Naive thymus-derived CD4-positive, alpha-beta T cell (primary cell): ENCODE measurements at regions of chr21 and their contacts with region 1.

Region 1: GRCh38 chr21:38244885-38245545 is 11.8 kb upstream of the KCNJ15 start:
- DNase-seq: peak; percentile 11 to 84 (median 70)
- ATAC-seq: peak; percentile 97
- H3K4me3 ChIP-seq: no peak overlapping the region
- H3K4me3 Mint-ChIP-seq: peak overlapping the region in 8 of 10 donors; percentile 42 to 74 (median 48)
- H3K27ac ChIP-seq: no peak overlapping the region
- H3K27ac Mint-ChIP-seq: peak overlapping the region; percentile 81 to 97 (median 89)
- H3K4me1 ChIP-seq: peaks cover 0 to 19% of the 10 kb centered on the region in 2 donors
- H3K4me1 Mint-ChIP-seq: peaks cover 17 to 43% (median 26%) of the 10 kb centered on the region in 7 donors
- H3K27me3 ChIP-seq: no peaks in the 10 kb centered on the region
- H3K27me3 Mint-ChIP-seq: peaks cover 0 to 17% (median 0%) of the 10 kb centered on the region in 5 donors

Region 2: GRCh38 chr21:38269576-38269936 is 24.5 kb after region 1 on chr21:
- CTCF ChIA-PET with region 1: interaction called, 3 read pairs
- POLR2A ChIA-PET with region 1: no interaction called
- intact Hi-C with region 1: loop called in 1 of 2 experiments (anchors 2 kb)
- DNase-seq: no peak
- ATAC-seq: no peak
- H3K4me3 ChIP-seq: no peak overlapping the region
- H3K4me3 Mint-ChIP-seq: no peak overlapping the region
- H3K27ac ChIP-seq: no peak overlapping the region
- H3K27ac Mint-ChIP-seq: no peak overlapping the region
- H3K4me1 ChIP-seq: no peaks in the 10 kb centered on the region
- H3K4me1 Mint-ChIP-seq: peaks cover 0 to 35% (median 6%) of the 10 kb centered on the region in 7 donors
- H3K27me3 ChIP-seq: no peaks in the 10 kb centered on the region
- H3K27me3 Mint-ChIP-seq: peaks cover 0 to 6% (median 3%) of the 10 kb centered on the region in 5 donors

Region 3: DNA sequence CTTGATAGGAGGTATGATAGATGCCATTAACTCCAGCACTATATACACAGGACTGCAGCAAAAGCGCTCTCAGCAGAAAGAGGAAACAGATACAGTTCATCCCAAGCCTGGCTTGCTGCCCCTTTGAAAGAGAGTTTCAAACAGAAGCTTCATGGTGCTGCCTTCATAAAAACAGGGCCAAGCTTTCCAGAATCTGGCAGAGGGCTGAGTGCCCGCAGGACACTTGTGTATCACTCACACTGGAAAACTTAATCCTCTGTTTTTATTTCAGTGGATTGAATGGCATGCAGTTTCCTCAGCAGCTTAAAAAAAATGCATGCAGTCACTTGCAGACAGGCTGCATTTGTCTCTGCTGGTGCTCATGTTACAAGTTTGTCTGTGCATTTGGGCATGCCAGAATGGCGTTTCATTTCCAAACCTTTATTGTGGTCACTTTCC is 52.2 kb after region 1 on chr21:
- CTCF ChIA-PET with region 1: no interaction called
- POLR2A ChIA-PET with region 1: interaction called, 3 read pairs
- intact Hi-C with region 1: loop called (anchors 2 to 5 kb)
- DNase-seq: no peak
- ATAC-seq: peak; percentile 57
- H3K4me3 ChIP-seq: no peak overlapping the region
- H3K4me3 Mint-ChIP-seq: peak overlapping the region in 8 of 10 donors; percentile 5 to 85 (median 65)
- H3K27ac ChIP-seq: peak overlapping the region; percentile 19
- H3K27ac Mint-ChIP-seq: peak overlapping the region in 8 of 9 donors; percentile 79 to 94 (median 88)
- H3K4me1 ChIP-seq: peaks cover 0 to 59% of the 10 kb centered on the region in 2 donors
- H3K4me1 Mint-ChIP-seq: peaks cover 23 to 91% (median 51%) of the 10 kb centered on the region in 7 donors
- H3K27me3 ChIP-seq: no peaks in the 10 kb centered on the region
- H3K27me3 Mint-ChIP-seq: peaks cover 0 to 3% (median 0%) of the 10 kb centered on the region in 5 donors

Region 4: GRCh38 chr21:38306433-38307141 is 61.6 kb after region 1 on chr21:
- CTCF ChIA-PET with region 1: no interaction called
- POLR2A ChIA-PET with region 1: no interaction called
- intact Hi-C with region 1: loop called (anchors 1 to 5 kb)
- DNase-seq: peak in 7 of 9 donors; percentile 43 to 84 (median 75)
- ATAC-seq: peak; percentile 90
- H3K4me3 ChIP-seq: peak overlapping the region; percentile 31
- H3K4me3 Mint-ChIP-seq: peak overlapping the region; percentile 0 to 64 (median 41)
- H3K27ac ChIP-seq: peak overlapping the region; percentile 33
- H3K27ac Mint-ChIP-seq: peak overlapping the region in 8 of 9 donors; percentile 46 to 96 (median 90)
- H3K4me1 ChIP-seq: peaks cover 0 to 15% of the 10 kb centered on the region in 2 donors
- H3K4me1 Mint-ChIP-seq: peaks cover 0 to 34% (median 13%) of the 10 kb centered on the region in 7 donors
- H3K27me3 ChIP-seq: no peaks in the 10 kb centered on the region
- H3K27me3 Mint-ChIP-seq: no peaks in the 10 kb centered on the region

Region 5: DNA sequence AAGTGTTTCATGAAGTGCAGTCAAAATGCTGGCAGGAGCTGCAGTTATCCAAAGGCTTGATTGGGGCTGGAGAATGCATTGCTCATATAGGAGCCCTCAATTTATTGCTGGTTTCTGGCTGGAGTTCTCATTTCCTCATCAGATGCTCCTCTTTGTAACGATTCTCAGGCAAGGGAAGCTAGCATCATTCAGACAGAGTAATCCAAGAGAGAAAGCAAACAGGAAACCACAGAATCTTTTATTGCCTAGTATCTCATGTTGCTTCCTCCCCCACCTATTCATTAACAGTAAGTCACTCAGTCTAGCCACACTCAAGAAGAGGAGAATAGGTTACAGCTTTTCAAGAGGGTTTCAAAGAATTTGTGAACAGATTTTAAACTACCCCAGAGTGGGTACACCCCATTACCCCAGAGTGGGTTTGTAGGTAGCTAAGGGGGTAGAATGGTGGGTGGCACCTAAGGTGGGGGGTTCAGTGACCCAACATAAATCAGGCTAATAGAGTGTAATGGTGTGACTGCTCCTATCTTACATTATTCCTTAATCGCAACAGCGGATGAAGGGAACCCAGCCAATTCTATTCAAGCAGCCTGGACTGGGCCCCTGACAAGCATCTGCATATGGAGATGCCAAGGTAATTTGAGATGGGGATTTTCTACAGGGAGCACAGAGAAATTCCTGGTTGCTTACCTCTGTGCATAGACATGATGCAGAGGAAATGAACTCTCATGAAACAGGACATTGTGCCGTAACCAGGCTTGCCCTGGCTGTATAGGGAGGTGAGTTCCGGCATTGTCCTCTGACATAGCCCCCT is 78.9 kb after region 1 on chr21:
- CTCF ChIA-PET with region 1: no interaction called
- POLR2A ChIA-PET with region 1: no interaction called
- intact Hi-C with region 1: loop called in 1 of 2 experiments (anchors 1 kb)
- DNase-seq: peak in 7 of 9 donors; percentile 51 to 79 (median 70)
- ATAC-seq: peak; percentile 97
- H3K4me3 ChIP-seq: peak overlapping the region; percentile 17
- H3K4me3 Mint-ChIP-seq: peak overlapping the region; percentile 36 to 73 (median 55)
- H3K27ac ChIP-seq: no peak overlapping the region
- H3K27ac Mint-ChIP-seq: peak overlapping the region; percentile 39 to 99 (median 92)
- H3K4me1 ChIP-seq: peaks cover 0 to 24% of the 10 kb centered on the region in 2 donors
- H3K4me1 Mint-ChIP-seq: peaks cover 17 to 44% (median 26%) of the 10 kb centered on the region in 7 donors
- H3K27me3 ChIP-seq: no peaks in the 10 kb centered on the region
- H3K27me3 Mint-ChIP-seq: peaks cover 0 to 5% (median 0%) of the 10 kb centered on the region in 5 donors